ENCODE measurements at regions of chr2 and their contacts with region 1.

Region 1: GRCh38 chr2:100562732-100563720 is at the start of gene PDCL3:
- DNase-seq: peak; percentile 95
- H3K4me3 Mint-ChIP-seq: peak within 1 kb of the TSS; percentile 88
- H3K27ac Mint-ChIP-seq: peak within 1 kb of the TSS; percentile 98
- H3K4me1 Mint-ChIP-seq: peaks cover 32% of the 10 kb centered on the region
- H3K27me3 Mint-ChIP-seq: no peaks in the 10 kb centered on the region
- total RNA-seq, gene PDCL3: 45.9 to 47.7 TPM

Region 2: DNA sequence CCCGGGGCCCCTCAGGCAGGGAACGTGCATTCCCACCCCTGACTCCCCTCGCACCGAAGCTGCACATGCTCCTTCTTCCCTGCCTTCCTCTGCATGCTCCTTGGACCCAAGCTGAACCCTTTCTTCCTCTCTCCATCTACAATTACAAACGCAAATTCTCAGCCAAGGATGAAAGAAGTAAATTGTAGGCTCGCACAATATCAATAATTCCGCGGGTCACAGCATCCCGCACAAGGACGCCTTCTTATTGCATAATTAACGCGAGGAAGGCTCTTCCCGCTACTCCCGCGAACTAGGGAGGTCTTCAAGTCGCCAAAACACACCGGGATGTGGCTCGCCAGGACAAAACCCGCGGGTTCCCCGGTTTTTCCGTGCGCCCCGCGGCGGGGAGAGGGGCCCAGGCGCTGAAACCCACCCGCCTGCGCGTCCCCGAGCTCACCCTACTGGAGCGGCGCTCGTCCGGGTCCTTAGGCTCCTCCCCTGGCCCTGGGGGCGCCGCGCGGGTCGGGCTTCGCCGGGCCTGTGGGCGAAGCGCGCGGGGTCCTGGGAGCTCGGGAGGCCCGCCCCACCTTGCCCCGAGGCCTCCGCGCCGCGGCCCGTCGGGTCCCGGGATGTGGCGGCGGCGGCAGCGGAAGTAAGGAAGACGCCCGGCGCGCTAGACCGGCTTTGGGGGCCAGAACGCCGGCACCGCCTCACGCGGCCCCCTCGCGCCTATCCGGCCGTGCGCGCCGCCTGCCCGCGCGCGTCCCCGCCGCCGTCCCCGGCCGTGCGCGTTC is 145.9 kb before region 1 on chr2 and contains the start of gene CHST10:
- CTCF ChIA-PET with region 1: no interaction called
- POLR2A ChIA-PET with region 1: no interaction called
- intact Hi-C with region 1: loop called (anchors 5 kb)
- DNase-seq: peak; percentile 60
- H3K4me3 Mint-ChIP-seq: peak within 1 kb of the TSS; percentile 84
- H3K27ac Mint-ChIP-seq: no peak within 1 kb of the TSS
- H3K4me1 Mint-ChIP-seq: peaks cover 24% of the 10 kb centered on the region
- H3K27me3 Mint-ChIP-seq: peaks cover 9% of the 10 kb centered on the region
- total RNA-seq, gene CHST10: 3.6 to 4.7 TPM

Region 3: GRCh38 chr2:100580367-100581276 is 17.6 kb after region 1 on chr2:
- CTCF ChIA-PET with region 1: interaction called, 9 read pairs
- POLR2A ChIA-PET with region 1: interaction called, 27 read pairs
- intact Hi-C with region 1: loop called (anchors 1 kb)
- DNase-seq: peak; percentile 64
- H3K4me3 Mint-ChIP-seq: peak overlapping the region; percentile 71
- H3K27ac Mint-ChIP-seq: peak overlapping the region; percentile 96
- H3K4me1 Mint-ChIP-seq: peaks cover 38% of the 10 kb centered on the region
- H3K27me3 Mint-ChIP-seq: no peaks in the 10 kb centered on the region

Region 4: GRCh38 chr2:100588071-100588786 is 25.2 kb after region 1 on chr2:
- CTCF ChIA-PET with region 1: no interaction called
- POLR2A ChIA-PET with region 1: no interaction called
- intact Hi-C with region 1: loop called (anchors 1 kb)
- DNase-seq: peak; percentile 34
- H3K4me3 Mint-ChIP-seq: peak overlapping the region; percentile 5
- H3K27ac Mint-ChIP-seq: peak overlapping the region; percentile 73
- H3K4me1 Mint-ChIP-seq: peaks cover 43% of the 10 kb centered on the region
- H3K27me3 Mint-ChIP-seq: no peaks in the 10 kb centered on the region

Region 5: GRCh38 chr2:101001691-101002561 is 438.9 kb after region 1 on chr2 and contains the start of gene RPL31:
- CTCF ChIA-PET with region 1: no interaction called
- POLR2A ChIA-PET with region 1: interaction called, 9 read pairs
- intact Hi-C with region 1: loop called (anchors 1 kb)
- DNase-seq: peak; percentile 98
- H3K4me3 Mint-ChIP-seq: peak within 1 kb of the TSS; percentile 90
- H3K27ac Mint-ChIP-seq: peak within 1 kb of the TSS; percentile 87
- H3K4me1 Mint-ChIP-seq: peaks cover 40% of the 10 kb centered on the region
- H3K27me3 Mint-ChIP-seq: no peaks in the 10 kb centered on the region
- total RNA-seq, gene RPL31: 1,809 to 1,825 TPM